ENCODE measurements at regions of chr11 and their contacts with region 1.

Region 1: DNA sequence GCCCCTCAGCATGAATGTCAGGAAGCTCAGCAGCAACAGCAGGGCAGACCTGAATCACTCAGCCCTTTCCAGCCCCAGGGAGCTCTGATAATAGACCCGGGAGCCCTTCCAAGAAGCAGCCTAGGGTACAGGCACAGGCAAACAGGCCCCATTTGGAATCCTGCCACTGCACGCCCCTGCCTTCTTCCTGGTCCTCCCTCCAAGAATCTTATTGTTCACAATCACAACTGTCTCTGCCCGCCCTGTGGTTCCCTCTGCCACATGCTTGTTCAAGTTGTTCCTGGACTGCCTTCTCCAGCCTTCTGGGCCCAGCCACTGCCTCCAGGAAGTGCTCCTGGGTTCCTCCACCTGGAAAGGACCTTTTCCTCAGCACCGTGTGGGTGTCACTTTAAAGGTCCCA is 54.6 kb downstream of the LRRC32 start:
- DNase-seq: peak; percentile 92

Region 2: GRCh38 chr11:76666408-76666807 is 50.5 kb after region 1 on chr11:
- intact Hi-C with region 1: loop called in 1 of 2 experiments (anchors 5 kb)
- DNase-seq: peak; percentile 89

Region 3: GRCh38 chr11:76807206-76807875 is 191.4 kb after region 1 on chr11:
- intact Hi-C with region 1: no loop called
- DNase-seq: peak; percentile 97